ENCODE measurements at regions of chr19 and their contacts with region 1.

Region 1: DNA sequence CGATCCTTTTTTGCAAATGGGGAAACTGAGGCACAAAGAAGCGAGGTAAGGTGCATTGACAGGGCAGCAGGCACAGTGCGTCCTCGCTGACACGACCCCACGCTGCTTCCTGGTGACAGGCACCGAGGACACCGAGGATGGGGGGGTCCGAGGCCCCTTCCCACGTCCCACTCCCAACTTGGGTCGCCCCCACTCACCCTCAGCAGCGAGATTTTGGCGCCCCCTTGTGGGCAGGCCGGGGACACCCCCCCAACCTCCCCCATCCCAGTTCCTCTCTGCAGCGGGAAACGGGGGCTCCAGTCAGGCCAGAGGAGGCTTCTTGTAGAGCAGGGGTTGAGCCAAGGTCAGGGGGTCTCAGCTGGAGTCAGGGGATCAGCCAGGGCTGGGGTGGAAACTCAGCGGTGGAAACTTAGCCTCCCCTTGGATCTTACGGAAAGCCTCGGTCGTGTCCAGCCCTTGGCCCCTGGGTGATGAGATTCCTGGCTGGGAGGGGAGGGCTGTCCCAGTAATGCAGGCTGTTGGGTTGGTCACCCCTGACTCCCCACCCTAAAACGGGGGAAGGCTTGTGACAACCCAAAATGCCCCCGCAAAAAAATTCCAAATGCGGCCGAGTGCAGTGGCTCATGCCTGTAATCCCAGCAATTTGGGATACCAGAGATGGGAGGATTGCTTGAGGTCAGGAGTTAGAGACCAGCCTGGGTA is 8.2 kb downstream of the SMIM24 start:
- DNase-seq: no peak
- H3K4me3 ChIP-seq: no peak overlapping the region
- CTCF ChIP-seq: peak; percentile 85

Region 2: GRCh38 chr19:3313199-3313575 is 158.9 kb before region 1 on chr19:
- CTCF ChIA-PET with region 1: interaction called, 14 read pairs
- POLR2A ChIA-PET with region 1: no interaction called
- DNase-seq: no peak
- H3K4me3 ChIP-seq: no peak overlapping the region
- CTCF ChIP-seq: no peak

Region 3: DNA sequence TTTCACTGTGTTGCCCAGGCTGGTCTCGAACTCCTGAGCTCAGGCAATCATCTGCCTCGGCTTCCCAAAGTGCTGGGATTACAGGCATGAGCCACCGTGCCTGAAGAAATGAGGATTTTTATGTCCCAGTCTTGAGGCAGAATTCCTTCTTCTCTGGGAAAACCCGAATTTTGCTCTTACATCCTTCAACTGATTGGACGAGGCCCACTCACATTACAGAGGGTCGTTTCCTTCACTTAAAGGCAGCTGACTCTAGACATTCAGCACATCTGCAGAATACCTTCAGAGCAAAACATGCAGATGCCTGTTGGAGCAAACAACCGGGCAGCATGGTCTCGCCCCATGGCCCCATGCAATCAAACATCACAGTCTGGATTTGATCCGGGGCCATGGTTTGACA is 142.1 kb before region 1 on chr19:
- CTCF ChIA-PET with region 1: interaction called, 117 read pairs
- POLR2A ChIA-PET with region 1: no interaction called
- DNase-seq: no peak
- H3K4me3 ChIP-seq: no peak overlapping the region
- CTCF ChIP-seq: no peak

Region 4: DNA sequence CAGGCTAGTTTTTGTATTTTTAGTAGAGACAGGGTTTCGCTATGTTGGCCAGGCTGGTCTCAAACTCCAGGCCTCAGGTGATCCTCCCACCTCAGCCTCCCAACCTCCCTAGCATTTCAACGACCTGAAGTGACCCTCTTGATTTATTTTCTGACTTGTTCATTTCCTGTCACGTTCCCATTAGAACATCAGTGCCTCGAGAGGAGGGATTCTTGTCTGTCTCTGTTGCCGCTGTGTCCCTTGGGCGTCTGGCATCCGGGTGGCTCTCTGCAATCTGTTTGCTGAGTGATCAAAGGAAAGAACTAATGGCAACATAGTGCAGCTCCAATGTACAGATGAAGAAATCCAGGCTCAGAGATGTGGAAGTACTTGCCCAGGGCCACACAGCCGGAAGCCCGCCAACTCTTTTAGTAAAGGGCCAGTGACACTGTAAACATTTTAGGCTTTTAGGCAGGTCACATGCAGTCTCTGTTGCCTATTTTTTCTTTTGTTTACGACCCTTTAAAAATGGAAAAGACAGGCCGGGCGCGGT is 58.2 kb before region 1 on chr19:
- CTCF ChIA-PET with region 1: no interaction called
- POLR2A ChIA-PET with region 1: no interaction called
- DNase-seq: no peak
- H3K4me3 ChIP-seq: no peak overlapping the region
- CTCF ChIP-seq: no peak

Region 5: GRCh38 chr19:3429581-3430080 is 42.5 kb before region 1 on chr19:
- CTCF ChIA-PET with region 1: interaction called, 11 read pairs
- POLR2A ChIA-PET with region 1: no interaction called
- DNase-seq: no peak
- H3K4me3 ChIP-seq: no peak overlapping the region
- CTCF ChIP-seq: peak; percentile 91

Region 6: GRCh38 chr19:3459089-3459881 is 12.8 kb before region 1 on chr19:
- CTCF ChIA-PET with region 1: interaction called, 55 read pairs
- POLR2A ChIA-PET with region 1: interaction called, 4 read pairs
- DNase-seq: peak; percentile 40
- H3K4me3 ChIP-seq: no peak overlapping the region
- CTCF ChIP-seq: no peak